OCI-LY7 (cell line): ENCODE measurements at regions of chr7 and their contacts with region 1.

Region 1: GRCh38 chr7:30026229-30027064 is at the start of gene FKBP14:
- DNase-seq: peak; percentile 99
- H3K4me3 ChIP-seq: peak within 1 kb of the TSS; percentile 81
- H3K27ac ChIP-seq: peak within 1 kb of the TSS; percentile 69
- H3K4me1 ChIP-seq: peaks cover 45% of the 10 kb centered on the region
- CTCF ChIP-seq: no peak
- total RNA-seq, gene FKBP14: 5.3 and 6.3 TPM in 2 replicates

Region 2: DNA sequence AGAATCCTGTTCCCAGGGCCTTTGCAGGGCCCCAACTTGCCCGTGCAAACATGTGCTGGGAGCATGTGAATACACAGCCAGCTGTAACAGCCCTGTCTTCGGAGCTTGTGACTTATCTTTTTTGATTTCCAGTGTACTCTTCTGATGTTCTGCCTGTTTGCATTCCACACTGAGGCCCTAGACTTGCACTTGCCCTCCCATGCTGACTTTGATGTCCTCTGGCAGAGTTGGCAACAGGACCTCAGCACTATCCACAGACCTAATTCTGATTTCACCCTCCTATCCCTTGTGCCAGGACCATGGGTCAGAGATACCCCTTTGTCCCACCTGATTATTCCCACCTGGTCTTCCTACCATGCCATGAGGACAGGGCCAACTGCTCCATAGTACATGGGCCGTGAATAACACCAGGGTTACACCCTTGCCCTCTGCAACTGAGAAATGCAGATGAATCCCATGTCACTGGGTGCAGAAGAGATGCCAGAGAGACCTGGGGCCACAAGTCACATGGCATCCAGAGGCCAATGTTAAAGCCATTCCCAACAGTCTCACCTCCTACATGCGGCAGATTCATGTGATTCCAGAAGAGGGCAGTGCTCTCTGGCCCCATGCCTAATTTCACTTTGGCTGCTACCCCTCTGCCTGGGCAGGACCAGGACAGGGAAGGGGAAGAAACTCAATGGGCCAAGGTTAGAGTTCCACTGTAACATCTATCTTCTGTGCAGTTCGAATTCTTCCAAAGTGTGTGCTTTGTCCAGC is 79.8 kb before region 1 on chr7:
- CTCF ChIA-PET with region 1: no interaction called
- POLR2A ChIA-PET with region 1: no interaction called
- intact Hi-C with region 1: no loop called
- DNase-seq: peak; percentile 27
- H3K4me3 ChIP-seq: no peak overlapping the region
- H3K27ac ChIP-seq: no peak overlapping the region
- H3K4me1 ChIP-seq: no peaks in the 10 kb centered on the region
- CTCF ChIP-seq: peak; percentile 61

Region 3: DNA sequence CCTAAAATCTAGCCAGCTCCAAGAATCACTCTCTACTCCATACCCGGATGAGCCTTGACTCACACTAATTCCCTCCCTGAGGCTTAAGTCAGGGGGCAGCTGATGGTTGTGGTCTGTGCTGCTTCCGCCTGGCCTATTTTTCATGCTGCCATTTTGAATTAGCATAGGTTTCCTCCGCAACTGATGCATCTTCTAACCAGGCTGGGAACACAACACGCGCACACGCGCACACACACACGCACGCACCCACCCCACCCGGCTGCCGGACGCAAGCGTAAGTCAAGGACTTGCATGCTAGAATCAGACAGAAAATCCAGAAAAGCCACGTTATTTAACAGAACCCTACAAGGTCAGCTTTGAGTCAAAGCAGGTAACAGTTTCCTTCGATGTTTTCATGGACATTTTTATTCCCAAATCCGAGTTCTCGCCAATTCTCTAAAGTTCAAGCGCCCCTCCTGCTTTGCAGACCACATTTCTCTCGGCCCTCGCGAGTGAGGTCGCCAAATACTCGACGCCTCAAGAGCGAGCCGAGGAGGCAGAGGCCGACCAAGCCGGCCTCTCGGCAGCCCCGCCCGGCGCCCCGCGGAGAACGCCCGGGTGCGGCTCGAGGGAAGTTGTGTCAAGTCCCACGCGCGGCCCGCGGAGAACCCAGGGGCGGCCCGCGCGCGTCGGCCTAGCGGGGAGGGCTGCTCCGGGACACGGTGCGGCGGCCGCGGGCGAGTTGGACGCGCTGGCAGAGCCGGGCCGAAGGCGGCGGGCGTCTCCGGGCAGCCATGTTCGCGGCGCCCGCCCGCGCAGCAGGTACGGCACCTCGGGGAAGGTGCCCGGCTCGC is 37.8 kb before region 1 on chr7:
- CTCF ChIA-PET with region 1: no interaction called
- POLR2A ChIA-PET with region 1: interaction called, 10 read pairs
- intact Hi-C with region 1: loop called (anchors 1 kb)
- DNase-seq: peak; percentile 84
- H3K4me3 ChIP-seq: peak overlapping the region; percentile 100
- H3K27ac ChIP-seq: peak overlapping the region; percentile 77
- H3K4me1 ChIP-seq: peaks cover 34% of the 10 kb centered on the region
- CTCF ChIP-seq: no peak

Region 4: DNA sequence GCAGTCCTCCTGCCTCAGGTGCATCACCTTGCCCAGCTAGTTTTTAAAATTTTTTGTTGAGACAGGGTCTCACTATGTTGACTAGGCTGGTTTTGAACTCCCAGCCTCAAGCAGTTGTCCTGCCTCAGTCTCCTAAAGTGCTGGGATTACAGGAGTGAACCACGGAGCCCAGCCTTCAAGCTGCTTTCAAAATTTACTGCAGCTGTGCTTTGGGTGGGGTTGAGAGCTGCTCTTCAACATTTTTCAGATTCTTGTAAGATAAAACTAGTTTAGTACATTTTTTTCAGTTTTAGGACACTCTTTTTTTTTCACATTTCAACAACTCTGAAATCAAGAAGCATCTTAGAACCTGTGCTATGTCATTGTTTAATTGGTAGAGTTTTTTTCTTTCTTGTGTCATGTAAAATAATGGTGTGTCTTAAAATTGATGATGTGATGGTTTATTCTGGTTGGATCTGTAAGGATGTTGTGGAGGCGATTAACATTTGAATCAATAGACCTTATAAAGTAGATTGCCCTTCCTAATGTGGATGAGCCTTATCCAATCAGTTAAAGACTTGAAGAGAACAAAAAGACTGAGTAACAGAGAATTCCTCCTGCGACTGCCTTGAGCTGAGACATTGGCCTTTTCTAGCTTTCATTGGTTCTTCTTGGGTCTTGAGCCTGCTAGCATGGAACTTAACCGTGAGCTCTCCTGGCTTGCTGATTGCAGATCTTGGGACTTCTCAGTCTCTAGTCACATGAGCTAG is 15.2 kb after region 1 on chr7:
- CTCF ChIA-PET with region 1: no interaction called
- POLR2A ChIA-PET with region 1: interaction called, 10 read pairs
- intact Hi-C with region 1: no loop called
- DNase-seq: no peak
- H3K4me3 ChIP-seq: no peak overlapping the region
- H3K27ac ChIP-seq: no peak overlapping the region
- H3K4me1 ChIP-seq: no peaks in the 10 kb centered on the region
- CTCF ChIP-seq: no peak

Region 5: DNA sequence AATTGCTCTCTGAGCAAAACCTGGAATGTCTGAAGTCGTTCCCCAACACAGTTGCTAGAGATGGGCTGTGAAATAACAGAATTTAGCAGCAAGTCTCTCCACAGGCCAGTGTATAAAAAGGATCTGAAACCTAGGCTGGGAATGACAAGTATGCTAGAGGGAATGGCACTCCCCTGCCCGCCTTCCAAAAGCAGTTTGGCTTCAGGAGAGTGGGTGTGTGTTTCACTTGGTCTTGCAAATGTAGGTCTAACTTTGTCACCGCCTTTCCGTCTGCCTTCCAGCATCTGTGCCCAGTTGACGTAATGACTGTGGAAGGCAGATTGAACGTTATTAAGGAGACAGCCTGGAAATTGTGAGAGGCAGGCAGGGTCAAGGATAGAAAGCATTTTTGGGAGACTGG is 90.3 kb after region 1 on chr7:
- CTCF ChIA-PET with region 1: no interaction called
- POLR2A ChIA-PET with region 1: interaction called, 4 read pairs
- intact Hi-C with region 1: loop called (anchors 5 kb)
- DNase-seq: no peak
- H3K4me3 ChIP-seq: no peak overlapping the region
- H3K27ac ChIP-seq: no peak overlapping the region
- H3K4me1 ChIP-seq: peaks cover 45% of the 10 kb centered on the region
- CTCF ChIP-seq: no peak

Region 6: GRCh38 chr7:30148951-30149471 is 122.6 kb after region 1 on chr7:
- CTCF ChIA-PET with region 1: no interaction called
- POLR2A ChIA-PET with region 1: no interaction called
- intact Hi-C with region 1: no loop called
- DNase-seq: peak; percentile 28
- H3K4me3 ChIP-seq: no peak overlapping the region
- H3K27ac ChIP-seq: no peak overlapping the region
- H3K4me1 ChIP-seq: peaks cover 19% of the 10 kb centered on the region
- CTCF ChIP-seq: no peak

Region 7: GRCh38 chr7:30478349-30479201 is 452.1 kb after region 1 on chr7 and contains the start of gene NOD1:
- CTCF ChIA-PET with region 1: no interaction called
- POLR2A ChIA-PET with region 1: no interaction called
- intact Hi-C with region 1: loop called (anchors 2 kb)
- DNase-seq: peak; percentile 67
- H3K4me3 ChIP-seq: peak within 1 kb of the TSS; percentile 69
- H3K27ac ChIP-seq: no peak within 1 kb of the TSS
- H3K4me1 ChIP-seq: peaks cover 58% of the 10 kb centered on the region
- CTCF ChIP-seq: no peak
- total RNA-seq, gene NOD1: 8.4 and 9.5 TPM in 2 replicates

Region 8: DNA sequence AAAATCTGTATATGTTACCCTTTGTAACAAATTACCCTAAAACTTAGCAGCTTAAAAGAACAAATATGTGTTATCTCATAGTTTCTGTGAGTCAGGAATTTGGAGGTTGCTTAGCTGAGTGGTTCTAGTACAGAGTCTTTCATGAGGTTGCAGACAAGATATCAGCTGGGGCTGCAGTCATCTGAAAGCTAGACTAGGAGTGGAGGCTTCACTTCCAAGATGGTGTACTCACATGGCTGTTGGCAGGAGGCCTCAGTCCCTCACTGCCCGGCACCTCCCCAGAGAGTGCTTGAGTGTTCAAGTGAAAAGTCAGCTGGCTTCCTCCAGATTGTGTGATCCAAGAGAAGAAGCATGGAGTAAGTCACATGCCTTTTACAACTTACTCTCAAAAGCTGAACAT is 495.1 kb after region 1 on chr7:
- CTCF ChIA-PET with region 1: no interaction called
- POLR2A ChIA-PET with region 1: no interaction called
- intact Hi-C with region 1: no loop called
- DNase-seq: no peak
- H3K4me3 ChIP-seq: no peak overlapping the region
- H3K27ac ChIP-seq: no peak overlapping the region
- H3K4me1 ChIP-seq: peaks cover 20% of the 10 kb centered on the region
- CTCF ChIP-seq: no peak